Activated B cell treated with CpG ODN at 0.5 μM for 24 hours (primary cell): ENCODE measurements at regions of chr12 and their contacts with region 1.

Region 1: DNA sequence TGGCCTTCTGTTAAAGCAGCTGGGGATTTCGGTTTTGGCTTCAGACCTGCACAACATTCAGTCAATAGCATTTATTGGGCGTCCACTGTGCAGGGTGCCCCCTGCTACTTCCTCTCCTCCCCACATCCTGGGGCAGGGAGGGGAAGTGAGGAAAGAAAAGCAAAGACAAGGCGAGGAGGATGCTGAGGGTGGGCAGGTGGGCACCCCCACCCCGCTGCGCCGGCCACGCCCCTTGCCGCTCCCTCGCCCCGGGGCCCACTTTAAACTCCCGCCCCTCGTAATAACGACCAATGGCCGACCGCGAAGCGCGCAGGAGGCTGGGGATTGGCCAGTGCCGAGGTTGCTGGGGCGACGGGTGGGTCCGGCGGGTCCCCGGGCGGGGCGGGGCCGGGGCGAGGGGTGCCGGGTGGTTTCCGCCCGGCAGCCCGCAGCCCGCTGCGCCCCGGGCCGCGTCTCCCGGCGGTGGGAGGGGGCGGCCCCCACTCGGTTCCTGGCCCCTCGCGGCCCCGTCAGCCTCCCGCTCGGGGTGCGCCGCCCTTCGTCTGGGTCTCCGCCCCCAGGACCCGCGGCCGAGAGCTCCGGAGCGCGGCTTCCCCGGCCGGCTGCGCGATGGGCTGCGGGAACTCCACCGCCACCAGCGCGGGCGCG is at the start of gene C12orf75:
- DNase-seq: peak; percentile 82
- ATAC-seq: peak; percentile 94
- H3K4me3 Mint-ChIP-seq: peak within 1 kb of the TSS; percentile 86
- H3K27ac Mint-ChIP-seq: peak within 1 kb of the TSS; percentile 76
- H3K4me1 Mint-ChIP-seq: peaks cover 47% of the 10 kb centered on the region
- H3K27me3 Mint-ChIP-seq: no peaks in the 10 kb centered on the region
- CTCF ChIP-seq: no peak
- total RNA-seq, gene C12orf75: 37.1 and 40.8 TPM in 2 replicates

Region 2: GRCh38 chr12:105352052-105352451 is 21.6 kb after region 1 on chr12:
- CTCF ChIA-PET with region 1: no interaction called
- POLR2A ChIA-PET with region 1: interaction called, 7 read pairs
- intact Hi-C with region 1: loop called (anchors 1 kb)
- DNase-seq: no peak
- ATAC-seq: peak; percentile 92
- H3K4me3 Mint-ChIP-seq: peak overlapping the region; percentile 33
- H3K27ac Mint-ChIP-seq: peak overlapping the region; percentile 50
- H3K4me1 Mint-ChIP-seq: peaks cover 34% of the 10 kb centered on the region
- H3K27me3 Mint-ChIP-seq: no peaks in the 10 kb centered on the region
- CTCF ChIP-seq: no peak